ENCODE measurements at regions of chr16 and their contacts with region 1.

Region 1: DNA sequence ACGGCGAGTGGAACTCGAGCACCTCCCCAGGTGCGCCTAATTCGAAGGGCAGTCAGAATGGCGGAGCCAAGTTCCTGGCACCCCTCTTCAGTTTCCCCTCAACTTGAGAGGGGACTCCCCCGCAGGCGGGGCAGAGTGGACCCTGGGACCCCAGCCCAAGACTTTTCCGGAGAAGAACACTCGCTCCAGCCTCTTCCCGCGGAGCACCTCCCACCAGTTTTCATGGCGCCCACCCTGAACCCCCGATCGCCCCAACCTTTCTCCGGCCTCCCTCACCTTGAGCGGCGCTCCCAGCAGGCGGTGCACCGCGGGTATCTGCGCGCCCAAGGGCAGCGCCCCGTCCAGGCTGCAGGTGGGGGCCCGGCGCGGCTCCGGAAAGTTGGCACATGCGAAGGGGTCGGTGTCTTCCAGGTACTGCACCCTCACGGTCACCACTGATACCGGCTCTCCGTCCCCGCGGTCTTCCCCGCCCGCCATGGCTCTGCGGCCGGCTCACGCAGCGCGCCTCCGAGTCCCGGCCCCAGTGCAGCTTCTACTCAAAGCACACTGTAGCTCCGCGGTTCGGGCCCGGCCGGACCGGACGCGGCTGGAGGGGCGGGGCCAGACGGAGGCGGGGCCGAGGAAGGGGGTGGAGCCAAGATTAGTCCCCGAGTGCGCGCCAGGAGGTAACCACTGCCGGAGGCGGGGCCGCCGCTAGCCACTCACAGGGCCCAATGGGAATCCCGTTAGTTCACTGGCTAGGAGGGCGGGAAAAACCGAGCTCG is at the start of gene FHOD1:
- DNase-seq: peak; percentile 98 to 99 (median 99)
- ATAC-seq: peak; percentile 79 to 83 (median 80)
- H3K4me3 ChIP-seq: peak within 1 kb of the TSS; percentile 56 to 94 (median 86)
- H3K27ac ChIP-seq: peak within 1 kb of the TSS; percentile 82 to 100 (median 94)
- H3K4me1 ChIP-seq: peaks cover 27 to 73% (median 53%) of the 10 kb centered on the region in 12 donors
- H3K27me3 ChIP-seq: peaks cover 0 to 10% (median 0%) of the 10 kb centered on the region in 9 donors
- CTCF ChIP-seq: no peak
- POLR2A ChIP-seq: peak; percentile 75 to 95
- total RNA-seq, gene FHOD1: 9.6 to 30.3 (median 18.0) TPM

Region 2: GRCh38 chr16:67173808-67174705 is 73.1 kb before region 1 on chr16:
- intact Hi-C with region 1: loop called in 2 of 10 experiments (anchors 5 kb)
- DNase-seq: peak; percentile 85 to 95 (median 93)
- ATAC-seq: peak; percentile 73 to 78 (median 77)
- H3K4me3 ChIP-seq: peak overlapping the region; percentile 4 to 65 (median 53)
- H3K27ac ChIP-seq: peak overlapping the region; percentile 80 to 97 (median 92)
- H3K4me1 ChIP-seq: peaks cover 5 to 70% (median 58%) of the 10 kb centered on the region in 12 donors
- H3K27me3 ChIP-seq: peaks cover 0 to 4% (median 0%) of the 10 kb centered on the region in 9 donors
- CTCF ChIP-seq: peak in 9 of 12 donors; percentile 11 to 50 (median 35)
- POLR2A ChIP-seq: peak; percentile 22 to 75

Region 3: DNA sequence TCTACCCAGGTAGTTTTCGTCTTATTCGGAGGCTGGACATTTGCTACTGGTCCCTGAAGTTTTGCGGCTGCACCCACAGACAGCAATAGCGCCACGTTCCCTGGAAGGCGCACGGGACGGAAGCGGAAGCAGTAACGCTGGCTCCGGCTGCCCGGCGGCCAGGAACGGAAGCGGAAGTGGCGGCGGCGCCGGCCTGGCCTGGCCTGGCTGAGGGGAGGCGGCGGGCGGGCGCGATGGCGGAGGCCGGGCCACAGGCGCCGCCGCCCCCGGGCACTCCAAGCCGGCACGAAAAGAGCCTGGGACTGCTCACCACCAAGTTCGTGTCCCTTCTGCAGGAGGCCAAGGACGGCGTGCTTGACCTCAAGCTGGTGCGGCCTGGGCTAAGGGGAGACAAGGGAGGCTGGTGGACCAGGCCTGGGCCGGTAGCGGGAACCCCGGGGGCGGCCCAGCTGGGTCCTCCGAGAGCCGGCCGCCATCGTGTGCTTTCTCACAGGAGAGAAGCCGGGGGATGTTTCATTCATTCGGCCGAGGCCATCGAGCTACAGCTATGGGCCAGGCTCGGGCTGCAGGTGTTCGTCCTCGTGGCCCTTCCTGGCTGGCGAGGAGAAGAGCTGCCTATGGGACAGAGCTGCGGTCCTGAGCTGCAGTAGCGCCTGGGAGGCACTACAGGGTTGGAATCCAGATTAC is 55.0 kb before region 1 on chr16 and contains the start of gene E2F4:
- intact Hi-C with region 1: loop called in 1 of 10 experiments (anchors 5 kb)
- DNase-seq: peak; percentile 93 to 95 (median 93)
- ATAC-seq: peak; percentile 88 to 96 (median 92)
- H3K4me3 ChIP-seq: peak within 1 kb of the TSS; percentile 74 to 100 (median 94)
- H3K27ac ChIP-seq: peak within 1 kb of the TSS; percentile 65 to 93 (median 88)
- H3K4me1 ChIP-seq: peaks cover 2 to 40% (median 29%) of the 10 kb centered on the region in 12 donors
- H3K27me3 ChIP-seq: no peaks in the 10 kb centered on the region
- CTCF ChIP-seq: peak in 1 of 12 donors; percentile 6
- POLR2A ChIP-seq: peak in 1 of 2 donors; percentile 88
- total RNA-seq, gene E2F4: 25.2 to 71.3 (median 33.7) TPM

Region 4: DNA sequence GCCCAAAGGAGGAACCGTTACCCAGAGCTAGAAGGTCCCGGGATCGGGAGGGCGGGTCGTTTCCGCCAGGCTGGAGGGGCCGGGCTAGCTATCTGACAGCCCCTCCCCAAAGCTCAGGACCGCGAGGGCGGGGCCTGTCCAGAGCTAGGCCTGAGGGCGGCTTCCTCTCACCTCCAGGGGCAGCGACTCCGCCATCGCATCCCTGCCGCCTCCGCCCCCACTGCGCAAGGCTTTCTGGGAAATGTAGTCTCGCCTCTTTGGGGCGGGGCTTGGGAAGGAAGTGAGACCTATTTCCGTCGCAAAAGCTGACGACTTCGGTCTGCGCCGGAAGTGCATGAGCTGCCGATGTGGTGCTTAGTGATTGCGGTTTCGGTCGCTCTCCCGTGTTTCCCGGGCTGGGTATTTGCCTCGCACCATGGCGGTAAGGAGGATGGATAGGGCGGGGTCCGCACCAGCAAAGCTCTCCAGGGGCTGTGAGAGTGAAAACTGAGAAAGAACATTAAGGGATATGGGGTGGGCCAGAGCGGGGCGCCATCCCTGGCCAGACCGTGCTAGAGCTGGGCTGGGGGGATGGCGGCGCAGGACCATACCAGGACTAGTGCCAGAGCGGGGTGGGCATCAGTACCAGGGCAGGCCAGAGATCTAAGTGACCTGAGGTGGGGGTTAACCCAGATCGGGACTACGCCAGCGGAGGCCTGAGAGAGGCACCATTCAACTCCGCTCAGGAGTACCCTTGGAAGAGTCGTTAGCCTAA is 20.1 kb before region 1 on chr16 and contains the start of gene TMEM208:
- intact Hi-C with region 1: loop called in 1 of 10 experiments (anchors 2 kb)
- DNase-seq: peak; percentile 98 to 99 (median 99)
- ATAC-seq: peak; percentile 95 to 98 (median 96)
- H3K4me3 ChIP-seq: peak within 1 kb of the TSS; percentile 55 to 97 (median 84)
- H3K27ac ChIP-seq: peak within 1 kb of the TSS; percentile 66 to 94 (median 90)
- H3K4me1 ChIP-seq: peaks cover 2 to 32% (median 17%) of the 10 kb centered on the region in 12 donors
- H3K27me3 ChIP-seq: no peaks in the 10 kb centered on the region
- CTCF ChIP-seq: peak in 6 of 12 donors; percentile 1 to 39 (median 13)
- POLR2A ChIP-seq: peak in 1 of 2 donors; percentile 70
- total RNA-seq, gene TMEM208: 6.2 to 21.8 (median 11.9) TPM